Stomach (tissue), 19 donors: ENCODE measurements at regions of chr17 and their contacts with region 1.

Region 1: DNA sequence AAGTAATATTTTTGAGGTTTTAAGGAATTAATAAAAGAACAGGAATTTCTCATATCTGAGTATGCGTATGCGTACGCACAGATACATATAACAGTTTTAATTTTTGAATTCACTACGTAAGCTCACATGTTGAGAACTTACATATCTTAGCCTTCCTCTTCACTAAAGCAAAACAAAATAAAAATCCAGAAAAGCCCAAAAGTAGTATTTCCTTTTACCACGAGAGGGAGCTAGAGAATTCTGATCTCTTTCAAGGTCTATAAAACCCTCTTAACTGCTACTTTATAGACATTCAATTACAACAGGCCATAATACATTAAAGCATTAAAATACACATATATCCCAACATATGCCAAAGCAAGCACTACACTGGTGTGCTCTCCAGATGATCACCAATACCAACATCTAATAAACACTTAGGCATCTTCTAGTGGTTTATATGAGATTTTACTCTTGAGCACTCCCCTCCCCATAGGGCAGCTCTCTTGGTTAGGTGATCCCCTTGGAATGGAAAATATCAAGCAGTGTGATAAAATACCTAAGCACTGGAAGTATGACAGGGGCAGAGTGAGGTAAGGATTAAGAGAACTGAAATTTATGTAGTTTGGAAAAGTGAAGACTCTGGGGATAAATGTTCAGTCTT is 94.0 kb downstream of the SKAP1 start:
- DNase-seq: peak in 1 of 2 donors; percentile 80
- H3K4me3 ChIP-seq: no peak overlapping the region
- H3K27ac ChIP-seq: no peak overlapping the region
- H3K4me1 ChIP-seq: no peaks in the 10 kb centered on the region
- H3K27me3 ChIP-seq: peaks cover 0 to 77% (median 23%) of the 10 kb centered on the region in 3 donors
- CTCF ChIP-seq: peak in 5 of 7 experiments; percentile 51 to 73 (median 70)
- EP300 ChIP-seq: no peak
- POLR2A ChIP-seq: no peak

Region 2: DNA sequence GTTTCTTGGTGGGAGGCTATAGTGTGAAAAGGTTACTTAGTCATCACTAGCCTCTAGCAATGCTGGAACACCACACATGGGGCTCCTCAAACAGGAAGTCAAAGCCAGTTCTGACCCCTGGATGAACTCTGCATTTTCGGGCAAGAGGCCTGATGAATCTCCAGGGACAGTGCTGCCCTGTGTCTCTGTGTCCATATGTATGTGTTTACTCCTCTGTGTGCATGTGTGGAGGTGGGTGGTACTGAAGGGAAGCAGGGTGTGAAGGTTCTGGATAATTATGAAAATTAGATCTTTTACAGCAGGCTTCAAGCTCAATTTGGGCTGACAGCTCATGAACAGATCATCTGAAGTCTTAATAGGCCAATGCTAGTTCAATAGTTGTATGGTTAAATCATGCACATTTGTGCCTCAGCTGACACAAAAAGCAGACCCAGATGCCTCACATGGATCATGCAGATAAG is 94.8 kb before region 1 on chr17:
- intact Hi-C with region 1: no loop called
- DNase-seq: peak in 1 of 2 donors; percentile 80
- H3K4me3 ChIP-seq: no peak overlapping the region
- H3K27ac ChIP-seq: no peak overlapping the region
- H3K4me1 ChIP-seq: peaks cover 0 to 37% (median 19%) of the 10 kb centered on the region in 4 donors
- H3K27me3 ChIP-seq: no peaks in the 10 kb centered on the region
- CTCF ChIP-seq: no peak
- EP300 ChIP-seq: no peak
- POLR2A ChIP-seq: no peak

Region 3: GRCh38 chr17:48625495-48626244 is 289.7 kb after region 1 on chr17:
- intact Hi-C with region 1: loop called (anchors 10 kb)
- DNase-seq: peak; percentile 46 to 71
- H3K4me3 ChIP-seq: peak overlapping the region; percentile 32 to 58 (median 40)
- H3K27ac ChIP-seq: peak overlapping the region in 1 of 5 donors; percentile 23
- H3K4me1 ChIP-seq: peaks cover 23 to 27% (median 23%) of the 10 kb centered on the region in 4 donors
- H3K27me3 ChIP-seq: peaks cover 45 to 100% (median 99%) of the 10 kb centered on the region in 3 donors
- CTCF ChIP-seq: no peak
- EP300 ChIP-seq: no peak
- POLR2A ChIP-seq: no peak